Brain microvascular endothelial cell (primary cell): ENCODE measurements at regions of chr1 and their contacts with region 1.

Region 1: DNA sequence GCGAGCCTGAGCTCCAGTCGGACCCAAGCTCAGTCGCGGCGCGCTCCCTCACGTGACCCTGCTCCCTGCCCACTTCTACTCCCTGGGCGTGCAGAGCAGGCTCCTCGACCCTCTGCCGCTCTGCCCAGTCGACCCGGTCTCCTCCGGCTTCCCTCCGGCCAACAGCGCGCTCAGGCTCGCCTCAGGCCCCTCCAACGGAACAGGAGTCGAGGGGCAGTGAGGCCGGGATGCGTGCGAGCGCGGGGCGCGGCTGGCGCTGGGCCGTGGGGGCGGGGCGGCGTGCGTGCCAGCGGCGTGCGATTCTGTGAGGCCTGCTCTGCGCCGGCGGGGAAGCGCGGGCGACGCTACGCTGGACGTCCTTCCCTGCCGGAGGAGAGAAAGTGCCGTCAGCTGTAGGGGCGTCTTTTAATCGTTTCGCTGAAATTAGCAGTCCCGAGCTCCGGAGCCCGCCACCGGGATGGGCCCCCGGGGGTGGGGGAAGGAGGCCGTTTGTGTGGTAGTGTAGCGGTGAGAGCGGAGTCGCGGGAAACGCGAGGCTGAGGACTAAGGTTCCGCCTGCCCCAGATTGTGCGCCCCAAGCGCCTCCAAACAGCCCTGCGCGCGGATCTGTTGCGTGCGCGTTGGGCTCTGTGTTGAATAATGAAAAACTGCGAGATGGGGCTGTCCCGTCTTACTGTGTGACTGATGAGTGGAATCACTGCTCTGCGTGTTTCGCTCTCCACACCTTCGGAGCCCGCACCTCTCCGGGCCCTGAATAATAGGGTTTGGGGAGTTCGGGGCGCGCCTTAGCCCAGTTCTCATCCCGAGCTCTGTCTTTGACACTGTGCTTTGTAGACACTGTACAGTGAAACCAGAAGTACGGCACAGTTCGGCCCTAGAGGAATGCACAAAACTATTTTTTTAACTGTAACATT is at the start of gene ACBD6:
- DNase-seq: peak; percentile 82
- H3K4me3 ChIP-seq: peak within 1 kb of the TSS; percentile 96
- H3K27ac ChIP-seq: peak within 1 kb of the TSS; percentile 91
- H3K27me3 ChIP-seq: no peaks in the 10 kb centered on the region
- CTCF ChIP-seq: peak; percentile 43

Region 2: GRCh38 chr1:180425952-180426351 is 76.7 kb before region 1 on chr1:
- in situ Hi-C with region 1: no loop called
- DNase-seq: no peak
- H3K4me3 ChIP-seq: no peak overlapping the region
- H3K27ac ChIP-seq: no peak overlapping the region
- H3K27me3 ChIP-seq: no peaks in the 10 kb centered on the region
- CTCF ChIP-seq: no peak

Region 3: DNA sequence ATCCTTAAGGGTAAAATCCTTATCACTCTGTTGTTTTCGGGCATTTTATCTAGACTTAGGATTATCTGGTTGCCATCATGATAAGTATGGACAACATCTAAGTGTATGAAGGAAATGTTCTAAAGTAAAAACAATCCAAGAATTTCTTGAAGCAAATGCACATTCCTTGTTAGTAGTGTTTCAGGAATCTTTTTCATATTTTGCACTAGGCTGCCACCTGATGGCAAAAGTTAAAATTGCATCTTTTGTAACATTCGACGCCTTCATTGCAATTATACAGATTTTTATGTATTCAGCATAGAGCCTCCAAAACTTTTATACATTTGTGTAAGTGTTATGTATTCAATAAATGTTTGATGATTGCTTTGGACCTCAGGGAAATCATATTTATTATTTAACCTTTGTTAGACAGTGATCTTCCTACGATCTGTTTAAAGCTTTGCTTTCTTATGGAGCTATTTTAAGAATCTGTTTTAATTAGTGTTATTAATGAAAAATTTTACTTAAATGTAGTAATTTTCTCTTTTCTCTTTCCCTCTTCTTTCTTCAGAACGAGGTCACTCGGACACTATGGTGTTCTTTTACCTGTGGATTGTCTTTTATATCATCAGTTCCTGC is 360.6 kb after region 1 on chr1:
- in situ Hi-C with region 1: loop called (anchors 25 kb)
- DNase-seq: peak; percentile 63
- H3K4me3 ChIP-seq: no peak overlapping the region
- H3K27ac ChIP-seq: no peak overlapping the region
- H3K27me3 ChIP-seq: no peaks in the 10 kb centered on the region
- CTCF ChIP-seq: peak; percentile 49

Region 4: DNA sequence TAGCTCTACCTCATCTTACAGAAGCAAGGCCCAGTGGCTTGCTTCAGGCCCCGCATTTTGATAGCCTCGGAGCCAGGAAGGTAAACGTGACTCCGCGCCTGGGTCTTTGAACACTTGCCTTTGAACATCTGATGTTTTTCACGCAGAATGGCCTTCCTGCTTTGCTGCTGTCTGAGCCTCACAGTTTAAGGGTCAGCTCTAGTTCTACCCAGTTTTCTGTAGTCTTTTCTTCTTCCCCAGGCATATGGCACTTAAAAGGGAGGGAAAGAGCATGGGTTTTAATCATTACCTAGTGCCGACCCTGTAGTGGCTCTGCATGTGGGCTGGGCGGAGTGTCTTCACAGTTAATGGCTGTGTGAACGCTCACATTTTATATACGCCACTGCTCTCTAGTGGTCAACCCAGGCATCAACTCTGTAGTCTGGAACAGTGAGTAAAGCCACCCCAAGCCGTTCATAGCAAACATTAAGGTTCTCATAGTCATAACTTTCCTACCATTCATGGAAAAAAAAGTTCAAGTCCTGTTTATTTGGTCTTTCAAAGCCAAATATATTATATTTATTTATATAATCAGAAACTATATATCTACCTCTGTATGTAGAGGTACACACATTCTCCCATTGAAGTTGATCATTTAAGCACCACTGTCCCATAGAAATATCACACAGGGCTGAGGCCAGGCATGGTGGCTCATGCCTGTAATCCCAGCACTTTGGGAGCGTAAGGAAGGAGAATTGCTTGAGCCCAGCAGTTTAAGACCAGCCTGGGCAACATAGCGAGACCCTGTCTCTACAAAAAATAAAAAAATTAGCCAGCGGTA is 664.0 kb after region 1 on chr1:
- in situ Hi-C with region 1: loop called (anchors 25 kb)
- DNase-seq: peak; percentile 73
- H3K4me3 ChIP-seq: no peak overlapping the region
- H3K27ac ChIP-seq: no peak overlapping the region
- H3K27me3 ChIP-seq: no peaks in the 10 kb centered on the region
- CTCF ChIP-seq: peak; percentile 84